CD4-positive, alpha-beta T cell (primary cell): ENCODE measurements at regions of chr5 and their contacts with region 1.

Region 1: DNA sequence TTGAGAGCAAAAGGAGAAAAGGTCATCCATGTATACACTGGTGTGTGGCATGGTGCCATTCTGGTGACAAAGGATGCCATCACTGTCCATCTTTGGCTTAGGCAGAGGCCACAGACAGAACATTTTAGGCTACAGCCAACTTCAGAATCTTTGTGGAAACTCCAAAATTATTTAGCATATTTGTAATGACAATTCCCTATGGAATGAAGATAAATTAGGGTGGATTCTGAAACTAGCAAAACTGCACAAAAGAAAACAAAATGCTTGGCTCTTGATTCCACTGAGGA is 92.5 kb downstream of the FBXW11 start:
- DNase-seq: no peak
- ATAC-seq: no peak
- H3K4me3 ChIP-seq: no peak overlapping the region
- H3K4me3 Mint-ChIP-seq: no peak overlapping the region
- H3K27ac ChIP-seq: no peak overlapping the region
- H3K27ac Mint-ChIP-seq: peak overlapping the region; percentile 9
- H3K4me1 ChIP-seq: no peaks in the 10 kb centered on the region
- H3K4me1 Mint-ChIP-seq: peaks cover 45% of the 10 kb centered on the region
- H3K27me3 ChIP-seq: no peaks in the 10 kb centered on the region
- H3K27me3 Mint-ChIP-seq: no peaks in the 10 kb centered on the region
- CTCF ChIP-seq: no peak

Region 2: DNA sequence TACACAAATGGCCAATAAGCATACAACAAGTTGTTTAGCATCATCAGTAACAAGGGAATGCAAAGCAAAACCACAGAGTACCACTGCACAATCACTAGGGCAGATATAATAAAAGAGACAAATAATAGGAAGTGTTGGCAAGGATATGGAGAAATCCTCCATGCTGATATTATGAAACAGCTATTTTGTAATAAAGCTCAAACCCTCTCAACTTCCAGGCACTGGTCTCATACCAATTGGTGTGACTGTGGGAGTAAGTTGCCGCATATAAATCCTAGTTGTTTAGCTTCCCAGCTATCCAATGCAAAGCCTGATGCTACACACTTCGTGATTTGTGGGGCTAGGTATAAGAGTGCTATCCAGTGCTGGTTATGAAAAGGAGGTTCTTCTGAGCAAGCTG is 39.7 kb before region 1 on chr5:
- CTCF ChIA-PET with region 1: no interaction called
- POLR2A ChIA-PET with region 1: no interaction called
- intact Hi-C with region 1: no loop called
- DNase-seq: no peak
- ATAC-seq: no peak
- H3K4me3 ChIP-seq: no peak overlapping the region
- H3K4me3 Mint-ChIP-seq: no peak overlapping the region
- H3K27ac ChIP-seq: no peak overlapping the region
- H3K27ac Mint-ChIP-seq: no peak overlapping the region
- H3K4me1 ChIP-seq: no peaks in the 10 kb centered on the region
- H3K4me1 Mint-ChIP-seq: no peaks in the 10 kb centered on the region
- H3K27me3 ChIP-seq: no peaks in the 10 kb centered on the region
- H3K27me3 Mint-ChIP-seq: no peaks in the 10 kb centered on the region
- CTCF ChIP-seq: no peak

Region 3: GRCh38 chr5:172035039-172035438 is 121.1 kb after region 1 on chr5:
- CTCF ChIA-PET with region 1: interaction called, 11 read pairs
- POLR2A ChIA-PET with region 1: no interaction called
- intact Hi-C with region 1: loop called (anchors 1 kb)
- DNase-seq: no peak
- ATAC-seq: no peak
- H3K4me3 ChIP-seq: no peak overlapping the region
- H3K4me3 Mint-ChIP-seq: no peak overlapping the region
- H3K27ac ChIP-seq: no peak overlapping the region
- H3K27ac Mint-ChIP-seq: no peak overlapping the region
- H3K4me1 ChIP-seq: peaks cover 2% of the 10 kb centered on the region
- H3K4me1 Mint-ChIP-seq: peaks cover 15% of the 10 kb centered on the region
- H3K27me3 ChIP-seq: no peaks in the 10 kb centered on the region
- H3K27me3 Mint-ChIP-seq: no peaks in the 10 kb centered on the region
- CTCF ChIP-seq: no peak

Region 4: DNA sequence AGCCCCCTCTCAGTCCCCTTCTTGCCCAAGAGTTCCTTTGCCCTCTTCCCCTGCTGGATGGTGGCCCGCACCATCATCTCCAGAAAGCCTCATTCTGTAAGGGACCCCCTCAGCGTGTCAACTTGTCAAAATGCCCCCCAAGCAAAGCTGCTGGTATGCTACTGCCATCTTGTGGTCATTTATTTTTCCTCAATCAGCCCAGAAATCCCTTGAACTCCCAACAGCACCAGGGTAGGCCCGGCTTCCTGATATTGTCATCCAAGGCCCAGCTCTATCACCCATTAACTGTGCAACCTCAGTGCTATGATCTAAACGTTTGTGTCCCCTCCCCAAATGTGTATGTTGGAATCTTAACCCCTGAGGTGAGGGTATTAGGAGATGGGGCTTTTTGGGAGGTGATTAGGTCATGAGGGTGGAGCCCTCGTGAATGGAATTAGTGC is 145.8 kb after region 1 on chr5:
- CTCF ChIA-PET with region 1: interaction called, 14 read pairs
- POLR2A ChIA-PET with region 1: no interaction called
- intact Hi-C with region 1: loop called in 1 of 2 experiments (anchors 5 kb)
- DNase-seq: peak in 3 of 14 experiments; percentile 23 to 48 (median 45)
- ATAC-seq: no peak
- H3K4me3 ChIP-seq: no peak overlapping the region
- H3K4me3 Mint-ChIP-seq: no peak overlapping the region
- H3K27ac ChIP-seq: peak overlapping the region in 1 of 2 donors; percentile 22
- H3K27ac Mint-ChIP-seq: peak overlapping the region; percentile 31
- H3K4me1 ChIP-seq: peaks cover 7% of the 10 kb centered on the region
- H3K4me1 Mint-ChIP-seq: peaks cover 59% of the 10 kb centered on the region
- H3K27me3 ChIP-seq: no peaks in the 10 kb centered on the region
- H3K27me3 Mint-ChIP-seq: no peaks in the 10 kb centered on the region
- CTCF ChIP-seq: peak; percentile 53